IMR-90 (cell line): ENCODE measurements at regions of chr6 and their contacts with region 1.

Region 1: GRCh38 chr6:129598244-129599187 is 111.5 kb downstream of the ARHGAP18 start:
- DNase-seq: peak; percentile 84
- ATAC-seq: peak; percentile 91
- H3K4me3 ChIP-seq: no peak overlapping the region
- H3K27ac ChIP-seq: no peak overlapping the region
- H3K4me1 ChIP-seq: no peaks in the 10 kb centered on the region; the same call in 1 of the 2 replicates
- H3K27me3 ChIP-seq: no peaks in the 10 kb centered on the region
- CTCF ChIP-seq: peak; percentile 92
- POLR2A ChIP-seq: 0 out of 2 replicates have a peak, but pooled peaks have one; percentile 23
- RAD21 ChIP-seq: peak; percentile 94

Region 2: GRCh38 chr6:129657483-129657882 is 59.0 kb after region 1 on chr6:
- CTCF ChIA-PET with region 1: no interaction called
- POLR2A ChIA-PET with region 1: no interaction called
- dilution Hi-C with region 1: no loop called
- in situ Hi-C with region 1: no loop called
- intact Hi-C with region 1: no loop called
- DNase-seq: no peak
- ATAC-seq: no peak
- H3K4me3 ChIP-seq: no peak overlapping the region
- H3K27ac ChIP-seq: no peak overlapping the region
- H3K4me1 ChIP-seq: no peaks in the 10 kb centered on the region
- H3K27me3 ChIP-seq: no peaks in the 10 kb centered on the region
- CTCF ChIP-seq: no peak
- POLR2A ChIP-seq: no peak
- RAD21 ChIP-seq: no peak

Region 3: DNA sequence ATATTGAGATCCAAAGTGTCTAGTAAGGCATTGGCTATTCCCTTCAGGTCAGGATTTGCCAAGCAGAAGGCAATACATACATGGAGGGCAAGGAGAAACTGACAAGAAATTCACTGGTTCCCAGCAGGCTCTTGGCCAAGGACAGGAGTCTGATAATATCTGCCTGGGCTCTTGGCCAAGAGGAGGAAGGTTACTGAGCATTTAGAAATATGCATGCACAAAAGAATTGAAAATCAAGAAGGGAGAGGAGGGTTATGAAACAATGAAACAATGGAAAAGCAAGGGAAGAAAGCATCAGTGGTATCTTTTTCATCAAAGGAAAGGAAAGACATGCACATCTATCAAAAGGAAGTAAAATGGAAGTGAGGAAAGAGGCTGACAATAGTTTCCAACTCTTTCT is 69.1 kb after region 1 on chr6:
- CTCF ChIA-PET with region 1: interaction called, 3 read pairs
- POLR2A ChIA-PET with region 1: no interaction called
- dilution Hi-C with region 1: no loop called
- in situ Hi-C with region 1: loop called (anchors 5 kb)
- intact Hi-C with region 1: loop called (anchors 1 kb)
- DNase-seq: peak; percentile 50
- ATAC-seq: no peak
- H3K4me3 ChIP-seq: no peak overlapping the region
- H3K27ac ChIP-seq: no peak overlapping the region
- H3K4me1 ChIP-seq: peaks cover 10% of the 10 kb centered on the region
- H3K27me3 ChIP-seq: no peaks in the 10 kb centered on the region
- CTCF ChIP-seq: no peak
- POLR2A ChIP-seq: no peak
- RAD21 ChIP-seq: no peak

Region 4: DNA sequence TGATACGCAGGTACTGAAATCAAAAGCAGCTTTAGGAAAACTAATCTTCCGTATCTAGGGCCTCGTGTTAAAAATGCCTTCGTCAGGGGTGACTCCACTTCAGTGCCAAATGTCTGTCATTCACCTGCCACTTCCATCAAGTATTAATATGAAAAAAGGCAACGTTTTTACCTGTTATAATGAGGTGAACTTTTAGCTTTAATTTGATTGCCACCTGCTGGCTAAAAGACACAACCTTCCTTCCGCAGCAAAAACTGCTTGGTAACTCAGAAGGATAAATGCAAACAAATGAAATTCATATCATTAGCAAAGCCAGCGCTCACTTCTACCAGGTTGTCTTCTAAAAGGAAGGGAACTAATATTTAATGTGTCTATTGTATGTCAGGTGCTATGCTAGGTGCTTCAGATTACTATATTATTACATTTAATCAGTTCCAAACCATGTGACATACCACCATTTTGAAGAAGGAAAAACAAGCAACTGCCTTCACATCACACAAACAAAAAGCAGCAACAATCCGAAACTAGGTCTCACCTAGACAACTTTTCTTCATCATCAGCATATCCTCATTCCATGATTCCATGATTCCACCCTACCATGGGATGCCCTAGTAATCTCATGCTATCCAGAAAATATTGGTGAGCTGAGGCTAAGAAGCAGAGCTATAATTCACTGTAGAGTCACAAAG is 132.1 kb after region 1 on chr6:
- CTCF ChIA-PET with region 1: interaction called, 7 read pairs
- POLR2A ChIA-PET with region 1: no interaction called
- dilution Hi-C with region 1: no loop called
- in situ Hi-C with region 1: no loop called
- intact Hi-C with region 1: loop called (anchors 1 kb)
- DNase-seq: no peak
- ATAC-seq: no peak
- H3K4me3 ChIP-seq: no peak overlapping the region
- H3K27ac ChIP-seq: no peak overlapping the region
- H3K4me1 ChIP-seq: no peaks in the 10 kb centered on the region
- H3K27me3 ChIP-seq: no peaks in the 10 kb centered on the region
- CTCF ChIP-seq: peak; percentile 45
- POLR2A ChIP-seq: no peak
- RAD21 ChIP-seq: peak; percentile 59

Region 5: DNA sequence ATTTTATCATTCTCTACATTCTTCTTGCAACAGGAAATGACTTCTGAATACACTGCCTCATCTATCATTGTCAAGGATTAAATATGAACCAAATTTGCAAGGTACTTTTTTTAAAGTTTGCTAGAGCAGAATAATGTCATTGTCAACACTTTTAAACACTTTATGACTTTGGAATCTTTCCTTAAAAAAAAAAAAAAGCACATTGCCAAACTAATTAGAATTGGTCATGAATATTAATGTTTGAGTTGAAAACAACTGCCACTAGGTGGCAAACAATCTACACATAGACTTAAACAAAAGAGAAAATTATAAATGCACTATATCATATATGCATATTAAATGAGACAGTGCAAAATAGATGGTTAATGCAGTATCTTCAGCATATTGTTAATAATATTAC is 295.1 kb after region 1 on chr6:
- CTCF ChIA-PET with region 1: no interaction called
- POLR2A ChIA-PET with region 1: no interaction called
- dilution Hi-C with region 1: no loop called
- in situ Hi-C with region 1: no loop called
- intact Hi-C with region 1: loop called (anchors 10 kb)
- DNase-seq: peak; percentile 51
- ATAC-seq: no peak
- H3K4me3 ChIP-seq: no peak overlapping the region
- H3K27ac ChIP-seq: no peak overlapping the region
- H3K4me1 ChIP-seq: peaks cover 3% of the 10 kb centered on the region
- H3K27me3 ChIP-seq: no peaks in the 10 kb centered on the region
- CTCF ChIP-seq: peak; percentile 51
- POLR2A ChIP-seq: no peak
- RAD21 ChIP-seq: peak; percentile 51

Region 6: GRCh38 chr6:130020907-130021629 is 422.6 kb after region 1 on chr6:
- CTCF ChIA-PET with region 1: interaction called, 3 read pairs
- POLR2A ChIA-PET with region 1: no interaction called
- dilution Hi-C with region 1: no loop called
- in situ Hi-C with region 1: loop called (anchors 5 kb)
- intact Hi-C with region 1: loop called (anchors 1 kb)
- DNase-seq: peak; percentile 95
- ATAC-seq: peak; percentile 62
- H3K4me3 ChIP-seq: peak overlapping the region; percentile 86
- H3K27ac ChIP-seq: peak overlapping the region; percentile 81
- H3K4me1 ChIP-seq: no peaks in the 10 kb centered on the region
- H3K27me3 ChIP-seq: no peaks in the 10 kb centered on the region
- CTCF ChIP-seq: peak; percentile 95
- POLR2A ChIP-seq: peak; percentile 46
- RAD21 ChIP-seq: peak; percentile 91

Region 7: GRCh38 chr6:131216246-131216645 is 1617.7 kb after region 1 on chr6:
- CTCF ChIA-PET with region 1: no interaction called
- POLR2A ChIA-PET with region 1: no interaction called
- dilution Hi-C with region 1: no loop called
- in situ Hi-C with region 1: no loop called
- intact Hi-C with region 1: no loop called
- DNase-seq: no peak
- ATAC-seq: no peak
- H3K4me3 ChIP-seq: no peak overlapping the region
- H3K27ac ChIP-seq: no peak overlapping the region
- H3K4me1 ChIP-seq: peaks cover 3% of the 10 kb centered on the region; the same call in 1 of the 2 replicates
- H3K27me3 ChIP-seq: no peaks in the 10 kb centered on the region
- CTCF ChIP-seq: no peak
- POLR2A ChIP-seq: no peak
- RAD21 ChIP-seq: no peak